Left ventricle myocardium superior (tissue), 1 donor: ENCODE measurements at regions of chr5 and their contacts with region 1.

Region 1: GRCh38 chr5:103745353-103746065 is 182.9 kb upstream of the NUDT12 start:
- DNase-seq: no peak
- ATAC-seq: no peak

Region 2: DNA sequence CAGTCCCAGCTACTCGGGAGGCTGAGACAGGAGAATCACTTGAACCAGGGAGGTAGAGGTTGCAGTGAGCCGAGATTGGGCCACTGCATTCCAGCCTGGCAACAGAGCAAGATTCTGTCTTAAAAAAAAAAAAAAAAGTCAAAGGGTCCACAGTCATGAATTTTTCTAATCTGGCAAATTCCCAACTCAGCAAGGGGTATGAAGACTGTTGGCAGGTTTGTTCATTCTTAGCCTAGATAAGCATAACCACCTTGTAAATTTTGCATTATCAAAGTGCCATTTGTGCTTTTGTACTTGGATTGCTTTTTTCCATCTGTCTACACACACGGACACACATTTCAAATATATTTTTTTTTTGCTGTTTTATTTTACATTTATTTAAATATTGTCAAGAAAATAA is 116.9 kb after region 1 on chr5:
- intact Hi-C with region 1: no loop called
- DNase-seq: no peak
- ATAC-seq: no peak

Region 3: DNA sequence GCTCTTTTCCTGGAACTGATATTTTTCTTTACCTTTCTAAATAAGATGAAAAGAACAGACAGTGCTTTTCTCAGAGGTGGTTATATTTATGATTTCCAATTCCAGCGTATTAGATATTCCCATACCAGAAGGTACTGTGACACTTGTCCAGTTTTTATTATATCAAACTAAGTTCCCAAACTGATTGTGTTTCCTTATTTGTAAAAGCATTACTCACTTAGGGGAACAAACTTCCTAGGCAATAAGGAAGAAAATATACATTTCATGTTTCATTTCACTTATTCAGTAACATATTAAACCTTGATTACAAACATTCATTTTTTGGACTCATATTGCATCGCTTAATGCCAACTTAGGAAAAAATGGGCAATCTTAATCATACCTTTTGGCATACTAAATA is 1297.1 kb after region 1 on chr5:
- intact Hi-C with region 1: loop called (anchors 5 kb)
- DNase-seq: no peak
- ATAC-seq: no peak